Activated CD8-positive, alpha-beta T cell treated with anti-CD3 and anti-CD28 coated beads, Interleukin-2, amount 10 ng/mL, durations not matched to agents 7 days and 5 days (primary cell): ENCODE measurements at regions of chr14 and their contacts with region 1.

Region 1: DNA sequence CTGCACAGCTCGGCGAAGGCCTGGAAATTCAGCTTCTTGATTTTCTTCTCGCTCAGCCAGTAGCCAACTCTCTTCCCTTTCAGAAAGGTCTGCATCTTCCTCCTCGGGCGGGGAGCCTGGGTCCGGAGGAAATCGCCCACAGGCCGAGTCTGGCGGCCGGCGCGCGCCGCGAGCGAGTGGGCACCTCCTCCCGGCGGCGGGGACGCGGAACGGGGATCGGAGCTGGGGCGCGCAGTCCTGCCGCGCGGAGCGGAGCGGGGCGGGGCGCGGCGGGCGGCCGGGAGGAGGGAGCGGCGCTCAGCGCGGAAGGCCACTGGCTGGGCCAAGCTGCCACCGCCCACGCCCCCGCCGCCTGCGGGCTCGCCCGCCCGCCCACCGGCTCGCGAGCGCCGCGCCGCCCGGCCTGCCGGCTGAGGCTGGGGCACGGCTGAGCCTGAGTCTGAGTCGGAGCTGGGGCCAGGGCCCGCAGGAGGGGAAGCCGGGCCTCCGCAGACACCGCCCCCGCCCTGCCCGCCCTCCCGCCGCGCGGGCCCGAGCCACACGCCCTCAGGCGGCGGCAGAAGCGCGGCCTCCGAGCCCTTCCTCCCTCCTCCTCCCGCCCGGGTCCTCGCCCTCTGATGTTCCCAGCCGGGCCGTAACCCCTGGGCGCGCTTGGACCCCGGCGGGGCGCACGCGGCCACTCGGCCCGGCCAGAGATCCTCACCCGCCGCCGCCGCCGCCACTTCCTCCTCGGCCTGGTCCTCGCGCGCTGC is 480 bp downstream of the ITPK1 start:
- DNase-seq: peak; percentile 86
- ATAC-seq: peak; percentile 80
- H3K4me3 Mint-ChIP-seq: peak overlapping the region; percentile 81
- H3K27ac Mint-ChIP-seq: peak overlapping the region; percentile 77
- H3K4me1 Mint-ChIP-seq: peaks cover 47% of the 10 kb centered on the region
- H3K27me3 Mint-ChIP-seq: no peaks in the 10 kb centered on the region

Region 2: GRCh38 chr14:92922883-92923743 is 192.1 kb before region 1 on chr14 and contains the start of gene CHGA:
- CTCF ChIA-PET with region 1: no interaction called
- POLR2A ChIA-PET with region 1: no interaction called
- DNase-seq: peak; percentile 74
- ATAC-seq: peak; percentile 83
- H3K4me3 Mint-ChIP-seq: no peak within 1 kb of the TSS
- H3K27ac Mint-ChIP-seq: no peak within 1 kb of the TSS
- H3K4me1 Mint-ChIP-seq: peaks cover 4% of the 10 kb centered on the region
- H3K27me3 Mint-ChIP-seq: peaks cover 20% of the 10 kb centered on the region
- total RNA-seq, gene CHGA: not detected

Region 3: DNA sequence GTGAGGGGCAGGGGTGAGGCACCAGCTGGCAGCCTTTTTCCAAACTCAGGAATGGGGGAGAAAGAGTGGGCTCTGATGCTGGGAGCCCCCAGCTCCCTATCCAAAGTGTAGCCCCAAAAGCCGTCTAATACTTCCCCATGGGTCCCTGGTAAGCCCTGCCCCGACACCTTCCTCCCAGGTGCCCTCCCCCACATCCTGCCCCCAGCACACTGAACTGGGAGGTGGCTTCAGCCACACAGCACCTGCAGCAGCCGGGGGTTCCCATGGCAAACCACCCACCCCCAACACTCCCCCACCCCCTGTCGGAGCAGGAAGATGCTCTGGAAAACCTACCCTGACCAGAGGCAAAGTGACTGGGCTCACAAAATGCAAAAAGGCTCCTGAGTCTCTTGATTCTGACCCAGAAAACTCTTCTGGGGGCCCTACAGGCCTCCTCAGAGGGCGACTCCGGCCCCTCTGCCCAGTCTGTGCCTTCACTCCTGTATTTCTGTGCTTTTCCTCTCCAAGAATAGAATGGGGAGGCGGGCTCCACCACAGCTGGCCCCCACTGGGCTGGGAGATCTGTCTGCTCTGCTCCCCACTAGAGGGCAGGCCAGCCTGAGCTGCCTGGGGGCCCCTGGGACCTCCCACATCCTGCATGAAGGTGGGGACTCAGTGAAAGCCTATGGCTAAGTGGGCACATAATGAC is 81.1 kb before region 1 on chr14:
- CTCF ChIA-PET with region 1: interaction called, 103 read pairs
- POLR2A ChIA-PET with region 1: no interaction called
- DNase-seq: peak; percentile 77
- ATAC-seq: peak; percentile 90
- H3K4me3 Mint-ChIP-seq: peak overlapping the region; percentile 49
- H3K27ac Mint-ChIP-seq: peak overlapping the region; percentile 94
- H3K4me1 Mint-ChIP-seq: peaks cover 47% of the 10 kb centered on the region
- H3K27me3 Mint-ChIP-seq: no peaks in the 10 kb centered on the region

Region 4: GRCh38 chr14:93086441-93087055 is 28.7 kb before region 1 on chr14:
- CTCF ChIA-PET with region 1: interaction called, 30 read pairs
- POLR2A ChIA-PET with region 1: interaction called, 4 read pairs
- DNase-seq: no peak
- ATAC-seq: peak; percentile 41
- H3K4me3 Mint-ChIP-seq: peak overlapping the region; percentile 26
- H3K27ac Mint-ChIP-seq: peak overlapping the region; percentile 87
- H3K4me1 Mint-ChIP-seq: peaks cover 83% of the 10 kb centered on the region
- H3K27me3 Mint-ChIP-seq: no peaks in the 10 kb centered on the region

Region 5: DNA sequence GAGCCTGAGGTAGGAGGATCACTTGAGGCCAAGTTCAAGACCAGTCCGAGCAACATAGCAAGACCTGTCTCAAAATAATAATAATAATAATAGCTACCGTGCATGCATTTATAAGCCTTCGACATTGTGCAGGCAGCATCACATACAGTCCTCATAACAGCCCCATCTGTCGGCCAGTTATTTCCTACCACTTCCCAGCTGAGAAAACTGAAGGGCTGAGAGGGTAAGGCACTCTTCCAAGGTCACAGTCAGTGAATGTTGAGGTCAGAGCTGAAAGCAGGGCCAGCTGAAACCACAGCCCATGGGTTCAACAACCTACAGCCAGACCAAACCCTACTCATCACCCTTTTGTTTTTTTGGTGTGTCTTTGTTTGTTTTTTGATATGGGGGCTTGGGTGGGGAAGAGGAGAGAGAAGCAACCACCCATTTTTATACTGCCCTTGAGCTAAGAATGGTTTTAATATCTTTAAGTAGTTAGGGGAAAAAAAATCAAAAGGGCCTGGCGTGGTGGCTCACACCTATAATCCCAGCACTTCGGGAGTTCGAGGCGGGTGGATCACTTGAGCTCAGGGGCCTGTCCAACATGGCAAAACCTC is 17.3 kb after region 1 on chr14:
- CTCF ChIA-PET with region 1: interaction called, 101 read pairs
- POLR2A ChIA-PET with region 1: interaction called, 6 read pairs
- DNase-seq: peak; percentile 55
- ATAC-seq: peak; percentile 77
- H3K4me3 Mint-ChIP-seq: no peak overlapping the region
- H3K27ac Mint-ChIP-seq: no peak overlapping the region
- H3K4me1 Mint-ChIP-seq: no peaks in the 10 kb centered on the region
- H3K27me3 Mint-ChIP-seq: peaks cover 6% of the 10 kb centered on the region

Region 6: DNA sequence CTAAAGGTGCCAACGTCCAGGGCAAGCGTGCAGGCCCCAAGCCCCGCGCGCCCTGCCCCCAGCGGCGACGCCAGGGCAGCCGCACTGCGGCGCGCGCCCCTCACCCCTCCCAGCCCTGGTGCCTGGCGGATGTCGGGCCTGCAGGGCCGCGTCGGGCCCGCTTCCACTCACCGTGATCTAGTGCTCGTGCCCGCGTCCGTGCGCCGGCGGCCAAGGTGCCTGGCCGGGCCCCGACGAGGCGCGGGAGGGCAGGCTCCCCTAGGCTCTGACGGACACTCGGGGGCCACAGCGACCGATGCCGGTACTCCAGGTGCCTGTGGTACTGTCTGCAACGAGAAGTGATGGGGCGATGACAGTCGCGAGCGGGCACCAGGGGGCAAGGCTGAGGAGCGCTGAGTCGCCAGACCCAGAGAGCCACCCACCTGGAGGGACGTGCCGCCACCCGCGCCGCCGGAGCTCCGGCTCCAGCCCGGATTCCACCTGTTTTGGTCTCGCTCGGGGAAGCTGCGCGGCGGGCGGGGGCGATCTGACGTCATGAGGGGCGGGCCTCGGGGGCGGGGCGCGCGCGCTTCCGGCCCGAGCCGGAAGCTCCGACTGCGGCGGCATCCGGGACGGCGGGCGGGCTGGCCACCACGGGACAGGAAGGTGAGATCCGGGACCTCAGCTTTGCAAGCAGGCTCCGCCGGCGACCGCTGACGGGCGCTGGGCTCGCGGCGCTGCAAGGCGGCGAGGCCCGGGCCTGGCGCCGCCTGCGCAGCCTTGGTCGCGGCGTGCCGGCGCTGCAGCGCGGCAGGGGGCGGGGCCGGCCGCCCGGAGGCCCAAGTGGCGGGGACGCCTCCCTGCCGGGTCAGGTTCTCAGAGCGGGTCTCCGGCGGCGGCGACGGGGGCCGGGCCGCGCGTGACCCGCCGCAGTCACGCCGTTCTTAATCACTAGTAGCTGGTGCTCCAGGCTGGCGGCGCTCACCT is 69.4 kb after region 1 on chr14 and contains the starts of genes LYSET and MOAP1:
- CTCF ChIA-PET with region 1: interaction called, 15 read pairs
- POLR2A ChIA-PET with region 1: interaction called, 13 read pairs
- DNase-seq: peak; percentile 94
- ATAC-seq: peak; percentile 93
- H3K4me3 Mint-ChIP-seq: peak within 1 kb of the TSS; percentile 95
- H3K27ac Mint-ChIP-seq: peak within 1 kb of the TSS; percentile 92
- H3K4me1 Mint-ChIP-seq: peaks cover 34% of the 10 kb centered on the region
- H3K27me3 Mint-ChIP-seq: no peaks in the 10 kb centered on the region
- total RNA-seq, gene LYSET: 9.7 to 10.6 TPM
- total RNA-seq, gene MOAP1: 21.0 to 21.5 TPM